Body of pancreas (tissue), 4 donors: ENCODE measurements at regions of chr21 and their contacts with region 1.

Region 1: DNA sequence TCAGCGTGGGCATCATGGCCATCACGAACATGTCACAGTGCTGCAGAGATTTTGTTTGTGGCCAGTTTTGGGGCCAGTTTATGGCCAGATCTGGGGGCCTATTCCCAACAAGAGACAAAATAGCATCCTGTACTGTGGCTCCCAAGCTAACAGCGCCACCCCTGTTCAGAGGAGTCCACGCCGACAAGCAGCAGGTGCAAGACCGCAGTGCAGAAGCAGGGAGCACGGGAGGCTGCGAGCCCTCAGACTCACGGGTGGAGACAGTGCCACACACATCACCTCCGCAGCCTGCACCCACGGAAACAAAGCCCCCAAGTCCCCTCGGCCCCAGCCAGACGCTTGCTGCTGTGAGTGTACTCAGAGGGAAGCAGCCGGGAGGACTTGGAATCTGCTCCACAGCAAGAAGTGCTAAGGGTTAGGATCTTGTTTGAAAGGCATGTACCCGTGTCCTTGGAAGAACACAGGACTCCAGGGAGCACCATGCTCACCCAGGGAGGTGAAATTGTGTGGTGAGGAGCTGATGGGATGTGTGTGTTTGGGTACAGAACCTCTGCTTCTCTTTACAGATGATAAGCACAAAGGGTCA is 7.1 kb downstream of the TCP10L start:
- DNase-seq: peak in 1 of 4 donors; percentile 26
- ATAC-seq: no peak
- H3K4me3 ChIP-seq: no peak overlapping the region
- H3K27ac ChIP-seq: no peak overlapping the region
- H3K4me1 ChIP-seq: no peaks in the 10 kb centered on the region
- H3K27me3 ChIP-seq: no peaks in the 10 kb centered on the region
- CTCF ChIP-seq: peak in 5 of 7 experiments; percentile 14 to 24 (median 19)
- POLR2A ChIP-seq: no peak

Region 2: GRCh38 chr21:32392880-32393676 is 185.1 kb before region 1 on chr21 and contains the start of gene URB1:
- intact Hi-C with region 1: loop called (anchors 5 kb)
- DNase-seq: peak; percentile 92 to 94 (median 93)
- ATAC-seq: peak; percentile 96
- H3K4me3 ChIP-seq: peak within 1 kb of the TSS; percentile 73 to 98
- H3K27ac ChIP-seq: peak within 1 kb of the TSS; percentile 70 to 92 (median 82)
- H3K4me1 ChIP-seq: peaks cover 29% of the 10 kb centered on the region
- H3K27me3 ChIP-seq: no peaks in the 10 kb centered on the region
- CTCF ChIP-seq: peak in 3 of 7 experiments; percentile 5 to 26 (median 20)
- POLR2A ChIP-seq: peak; percentile 30 to 87 (median 77)
- total RNA-seq, gene URB1: 10.1 to 11.2 TPM

Region 3: DNA sequence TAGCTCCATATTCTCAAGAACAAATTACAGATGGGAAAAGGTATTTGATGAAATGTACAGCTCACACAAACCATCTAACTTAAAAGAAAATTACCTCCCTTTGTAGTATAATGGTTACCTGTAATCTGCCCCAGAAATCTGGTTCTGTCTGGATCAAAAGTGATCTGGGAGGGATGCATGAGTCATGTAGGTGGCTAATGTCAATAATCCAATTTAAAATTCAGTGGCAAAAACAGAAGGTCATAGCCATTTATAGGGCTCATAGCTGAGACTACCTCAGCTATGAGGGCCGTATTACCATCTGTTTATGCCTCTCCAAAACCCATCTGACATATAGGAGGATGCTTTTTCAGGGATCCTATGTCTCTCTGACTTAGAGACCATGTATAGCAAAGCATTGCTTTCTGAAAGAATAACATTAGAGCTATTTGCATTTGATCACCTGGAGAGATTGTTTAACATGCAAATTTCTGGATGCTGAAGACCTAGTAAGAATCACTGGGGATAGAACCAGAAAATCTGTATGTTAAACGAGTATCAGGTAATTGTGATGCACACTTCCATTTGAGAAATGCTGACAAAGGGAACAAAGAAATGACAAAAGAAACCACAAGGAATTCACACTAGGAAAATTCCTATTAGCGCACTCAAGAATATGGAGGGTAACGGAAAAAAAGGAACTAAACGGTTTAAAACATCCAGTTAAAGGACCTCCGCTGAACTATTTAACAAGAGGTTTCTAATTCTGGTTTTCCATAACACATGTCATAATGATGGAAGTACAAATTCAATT is 175.8 kb after region 1 on chr21:
- intact Hi-C with region 1: no loop called
- DNase-seq: no peak
- ATAC-seq: no peak
- H3K4me3 ChIP-seq: no peak overlapping the region
- H3K27ac ChIP-seq: no peak overlapping the region
- H3K4me1 ChIP-seq: peaks cover 6% of the 10 kb centered on the region
- H3K27me3 ChIP-seq: no peaks in the 10 kb centered on the region
- CTCF ChIP-seq: no peak
- POLR2A ChIP-seq: no peak